WTC11 (cell line): ENCODE measurements at regions of chr2 and their contacts with region 1.

Region 1: GRCh38 chr2:41869542-41870264 is 178.1 kb upstream of the PKDCC start:
- DNase-seq: peak; percentile 88
- ATAC-seq: peak; percentile 80
- H3K4me3 Mint-ChIP-seq: no peak overlapping the region
- H3K27ac Mint-ChIP-seq: no peak overlapping the region
- H3K4me1 Mint-ChIP-seq: peaks cover 43% of the 10 kb centered on the region
- H3K27me3 Mint-ChIP-seq: peaks cover 4% of the 10 kb centered on the region; the same call in 1 of the 2 replicates
- CTCF ChIP-seq: peak; percentile 85

Region 2: DNA sequence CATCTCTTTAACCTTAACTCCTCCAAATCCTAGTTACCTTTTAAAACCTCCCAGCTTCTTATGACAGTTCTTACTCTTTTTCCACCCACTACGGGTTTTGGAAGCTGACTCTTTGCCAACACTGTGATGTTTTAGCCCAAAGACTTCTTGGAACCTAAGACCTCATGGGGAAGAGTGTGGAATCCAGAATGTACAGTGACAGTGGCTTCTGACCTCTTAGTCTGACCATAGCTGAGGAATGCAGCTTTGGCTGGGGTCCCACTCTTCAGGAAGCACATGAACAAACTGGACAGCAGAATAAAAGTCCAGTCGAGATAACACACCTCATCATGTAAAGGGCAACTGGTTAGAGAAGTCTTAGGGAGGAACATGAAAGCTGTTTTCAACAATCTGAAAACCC is 17.1 kb after region 1 on chr2:
- CTCF ChIA-PET with region 1: interaction called, 11 read pairs
- POLR2A ChIA-PET with region 1: no interaction called
- DNase-seq: no peak
- ATAC-seq: no peak
- H3K4me3 Mint-ChIP-seq: no peak overlapping the region
- H3K27ac Mint-ChIP-seq: no peak overlapping the region
- H3K4me1 Mint-ChIP-seq: no peaks in the 10 kb centered on the region
- H3K27me3 Mint-ChIP-seq: no peaks in the 10 kb centered on the region
- CTCF ChIP-seq: no peak

Region 3: GRCh38 chr2:42028571-42029148 is 159.0 kb after region 1 on chr2:
- CTCF ChIA-PET with region 1: interaction called, 13 read pairs
- POLR2A ChIA-PET with region 1: no interaction called
- DNase-seq: no peak
- ATAC-seq: no peak
- H3K4me3 Mint-ChIP-seq: no peak overlapping the region
- H3K27ac Mint-ChIP-seq: no peak overlapping the region
- H3K4me1 Mint-ChIP-seq: peaks cover 69% of the 10 kb centered on the region
- H3K27me3 Mint-ChIP-seq: peaks cover 34% of the 10 kb centered on the region
- CTCF ChIP-seq: no peak

Region 4: GRCh38 chr2:42040643-42041278 is 171.1 kb after region 1 on chr2:
- CTCF ChIA-PET with region 1: interaction called, 83 read pairs
- POLR2A ChIA-PET with region 1: interaction called, 20 read pairs
- DNase-seq: no peak
- ATAC-seq: peak; percentile 80
- H3K4me3 Mint-ChIP-seq: no peak overlapping the region
- H3K27ac Mint-ChIP-seq: no peak overlapping the region
- H3K4me1 Mint-ChIP-seq: peaks cover 39% of the 10 kb centered on the region
- H3K27me3 Mint-ChIP-seq: no peaks in the 10 kb centered on the region
- CTCF ChIP-seq: no peak

Region 5: GRCh38 chr2:42053791-42054701 is 184.3 kb after region 1 on chr2:
- CTCF ChIA-PET with region 1: interaction called, 90 read pairs
- POLR2A ChIA-PET with region 1: interaction called, 3 read pairs
- DNase-seq: no peak
- ATAC-seq: no peak
- H3K4me3 Mint-ChIP-seq: no peak overlapping the region
- H3K27ac Mint-ChIP-seq: peak overlapping the region; percentile 45; the same call in 1 of the 2 replicates
- H3K4me1 Mint-ChIP-seq: peaks cover 63% of the 10 kb centered on the region
- H3K27me3 Mint-ChIP-seq: peaks cover 14% of the 10 kb centered on the region
- CTCF ChIP-seq: no peak

Region 6: GRCh38 chr2:42072349-42073118 is 202.8 kb after region 1 on chr2:
- CTCF ChIA-PET with region 1: interaction called, 18 read pairs
- POLR2A ChIA-PET with region 1: no interaction called
- DNase-seq: peak; percentile 34
- ATAC-seq: peak; percentile 80
- H3K4me3 Mint-ChIP-seq: no peak overlapping the region
- H3K27ac Mint-ChIP-seq: no peak overlapping the region
- H3K4me1 Mint-ChIP-seq: peaks cover 19% of the 10 kb centered on the region
- H3K27me3 Mint-ChIP-seq: no peaks in the 10 kb centered on the region; the same call in 1 of the 2 replicates
- CTCF ChIP-seq: no peak